ENCODE measurements at regions of chr15 and their contacts with region 1.

Region 1: DNA sequence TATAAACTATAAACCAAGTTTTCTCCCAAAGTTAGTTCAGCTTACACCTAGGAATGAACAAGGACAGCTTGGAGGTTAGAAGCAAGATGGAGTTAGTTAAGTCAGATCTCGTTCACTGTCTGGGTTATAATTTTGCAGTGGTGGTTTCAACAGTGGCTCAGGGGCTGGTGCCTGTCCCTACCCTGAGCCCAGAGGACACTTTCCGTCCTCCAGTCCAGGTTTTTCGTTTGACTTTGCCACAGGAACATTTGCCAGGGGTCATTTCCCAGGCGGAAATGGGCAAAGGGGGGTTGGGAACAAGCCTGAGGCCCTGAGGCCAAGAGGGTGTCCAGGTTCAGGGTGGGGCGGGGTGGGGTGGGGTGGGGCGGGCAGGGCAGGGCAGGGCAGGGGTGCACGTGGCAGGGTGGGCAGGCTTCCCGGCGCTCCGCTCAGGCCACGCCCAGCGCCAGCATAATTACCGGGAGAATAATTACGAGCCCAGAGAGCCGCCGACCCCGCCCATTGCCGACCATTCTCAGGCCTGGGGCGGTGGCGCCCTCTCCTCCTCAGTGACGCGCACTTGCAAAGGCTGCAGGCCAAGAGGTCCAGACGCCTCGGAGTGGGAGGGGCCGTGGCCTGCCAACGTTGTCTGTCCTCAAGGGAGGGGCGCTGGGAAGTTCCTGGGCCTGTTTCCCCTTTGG is 70.4 kb downstream of the KLF13 start:
- DNase-seq: peak; percentile 92 to 96 (median 93)
- ATAC-seq: peak; percentile 88 to 94 (median 94)
- H3K4me3 ChIP-seq: peak overlapping the region in 5 of 12 donors; percentile 0 to 32 (median 13)
- H3K27ac ChIP-seq: peak overlapping the region; percentile 53 to 86 (median 74)
- H3K4me1 ChIP-seq: peaks cover 0 to 40% (median 25%) of the 10 kb centered on the region in 12 donors
- H3K27me3 ChIP-seq: no peaks in the 10 kb centered on the region
- CTCF ChIP-seq: peak in 7 of 12 donors; percentile 9 to 57 (median 37)
- POLR2A ChIP-seq: no peak

Region 2: DNA sequence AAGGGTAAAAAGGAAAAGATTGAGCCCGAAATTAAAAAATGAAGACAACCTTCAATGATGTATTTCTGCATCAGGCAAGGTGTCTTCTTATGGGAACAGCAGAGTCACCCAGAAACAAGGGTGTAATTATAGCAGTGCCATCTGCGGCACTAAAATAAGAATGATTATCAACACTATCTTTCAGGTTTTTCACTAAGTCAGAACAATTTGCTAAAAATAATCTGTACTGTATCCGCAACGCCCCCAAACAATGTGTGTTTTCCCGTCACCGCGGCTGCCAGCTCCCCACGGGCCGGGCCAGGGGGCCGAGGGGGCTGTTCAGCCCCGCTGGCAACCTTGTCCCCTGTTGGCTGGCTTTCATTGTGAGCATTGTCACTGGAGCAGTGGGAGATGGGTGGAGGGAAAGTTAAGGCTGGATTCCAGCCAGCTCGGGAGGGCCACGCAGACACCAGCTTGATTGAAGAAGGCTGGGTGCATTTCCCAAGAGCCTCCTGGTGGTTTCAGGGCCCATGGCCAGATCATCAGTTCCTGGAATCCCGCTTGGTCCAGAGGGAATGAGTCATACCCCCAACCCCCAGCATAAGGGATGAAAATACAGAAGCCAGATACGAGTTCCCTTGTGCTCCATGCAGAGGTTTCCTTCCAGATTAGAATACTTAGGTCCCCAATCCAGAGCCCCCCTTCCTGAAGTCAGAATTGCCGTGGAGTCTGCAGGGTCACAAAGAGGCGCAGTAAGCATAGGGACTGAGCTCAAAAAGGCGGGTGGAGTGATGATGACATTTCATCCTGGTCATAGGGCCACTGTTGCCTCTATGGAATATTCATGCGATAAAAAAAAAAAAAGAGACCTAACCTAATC is 160.6 kb before region 1 on chr15:
- intact Hi-C with region 1: loop called in 1 of 10 experiments (anchors 5 kb)
- DNase-seq: peak; percentile 82 to 89 (median 84)
- ATAC-seq: peak; percentile 83 to 96 (median 94)
- H3K4me3 ChIP-seq: peak overlapping the region in 8 of 12 donors; percentile 4 to 31 (median 23)
- H3K27ac ChIP-seq: peak overlapping the region; percentile 83 to 96 (median 90)
- H3K4me1 ChIP-seq: peaks cover 5 to 53% (median 30%) of the 10 kb centered on the region in 12 donors
- H3K27me3 ChIP-seq: no peaks in the 10 kb centered on the region
- CTCF ChIP-seq: peak in 3 of 12 donors; percentile 5 to 28 (median 12)
- POLR2A ChIP-seq: no peak